Mammary epithelial cell (primary cell): ENCODE measurements at regions of chr6 and their contacts with region 1.

Region 1: GRCh38 chr6:168302534-168302933 is 17.0 kb downstream of the DACT2 start:
- DNase-seq: no peak
- H3K4me3 ChIP-seq: no peak overlapping the region
- H3K27ac ChIP-seq: no peak overlapping the region
- H3K4me1 ChIP-seq: no peaks in the 10 kb centered on the region
- H3K27me3 ChIP-seq: no peaks in the 10 kb centered on the region
- CTCF ChIP-seq: no peak

Region 2: DNA sequence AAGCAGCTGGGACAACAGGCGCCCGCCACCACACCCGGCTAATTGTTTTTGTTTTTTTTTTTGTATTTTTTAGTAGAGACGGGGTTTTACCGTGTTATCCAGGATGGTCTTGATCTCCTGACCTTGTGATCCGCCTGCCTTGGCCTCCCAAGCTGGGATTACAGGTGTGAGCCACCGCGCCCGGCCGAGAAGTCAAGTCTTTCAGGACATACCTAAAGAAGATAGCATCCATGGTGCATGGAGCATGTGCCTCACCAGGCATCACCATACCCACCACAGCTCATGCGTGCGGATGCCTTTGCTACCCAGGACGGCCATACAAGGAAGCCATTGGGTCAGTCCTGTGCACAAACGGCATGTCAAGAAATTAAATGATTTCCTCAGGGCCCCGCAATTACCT is 43.7 kb before region 1 on chr6:
- CTCF ChIA-PET with region 1: no interaction called
- dilution Hi-C with region 1: loop called (anchors 5 kb)
- in situ Hi-C with region 1: no loop called
- intact Hi-C with region 1: no loop called
- DNase-seq: no peak
- H3K4me3 ChIP-seq: no peak overlapping the region
- H3K27ac ChIP-seq: no peak overlapping the region
- H3K4me1 ChIP-seq: no peaks in the 10 kb centered on the region
- H3K27me3 ChIP-seq: no peaks in the 10 kb centered on the region
- CTCF ChIP-seq: no peak

Region 3: DNA sequence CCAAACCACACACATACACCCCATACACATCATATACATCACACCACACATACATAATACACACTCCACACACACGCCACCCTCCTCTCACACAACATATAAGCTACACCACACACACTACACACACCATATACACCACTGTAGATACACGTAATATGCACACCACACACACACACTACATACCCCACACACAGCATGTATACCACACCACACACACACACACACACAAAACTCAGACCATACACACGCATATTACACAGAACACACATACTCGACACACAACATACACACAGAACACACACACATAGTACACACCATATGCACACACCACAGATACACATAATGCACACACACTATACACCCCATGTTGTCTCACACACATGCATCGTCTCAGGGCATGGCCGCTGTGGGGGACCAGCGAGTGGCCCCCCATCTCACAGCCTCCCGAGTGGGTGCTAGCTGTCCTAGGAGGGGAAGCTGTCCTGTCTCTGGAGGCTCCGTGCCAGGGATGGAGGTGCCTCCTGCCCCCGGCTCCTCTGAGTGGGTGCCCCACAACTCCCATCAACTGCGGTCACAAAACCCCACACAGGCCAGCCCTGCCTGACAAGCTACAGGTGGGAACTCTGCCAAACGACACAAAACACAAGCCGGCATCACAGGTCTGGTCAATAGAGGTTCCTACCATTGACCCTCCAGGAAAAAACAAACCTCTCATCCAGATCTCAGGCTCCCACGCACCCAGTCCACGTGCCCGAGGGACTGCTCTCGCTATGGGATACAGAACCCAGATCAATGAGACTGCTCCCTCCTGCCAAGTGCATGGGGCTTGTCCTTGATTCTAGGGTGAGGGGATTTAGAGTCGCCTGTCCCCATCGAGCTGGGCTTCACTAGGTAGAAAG is 32.0 kb before region 1 on chr6:
- CTCF ChIA-PET with region 1: no interaction called
- dilution Hi-C with region 1: no loop called
- in situ Hi-C with region 1: no loop called
- intact Hi-C with region 1: no loop called
- DNase-seq: no peak
- H3K4me3 ChIP-seq: no peak overlapping the region
- H3K27ac ChIP-seq: no peak overlapping the region
- H3K4me1 ChIP-seq: no peaks in the 10 kb centered on the region
- H3K27me3 ChIP-seq: no peaks in the 10 kb centered on the region
- CTCF ChIP-seq: no peak